ENCODE measurements at regions of chr10 and their contacts with region 1.

Region 1: DNA sequence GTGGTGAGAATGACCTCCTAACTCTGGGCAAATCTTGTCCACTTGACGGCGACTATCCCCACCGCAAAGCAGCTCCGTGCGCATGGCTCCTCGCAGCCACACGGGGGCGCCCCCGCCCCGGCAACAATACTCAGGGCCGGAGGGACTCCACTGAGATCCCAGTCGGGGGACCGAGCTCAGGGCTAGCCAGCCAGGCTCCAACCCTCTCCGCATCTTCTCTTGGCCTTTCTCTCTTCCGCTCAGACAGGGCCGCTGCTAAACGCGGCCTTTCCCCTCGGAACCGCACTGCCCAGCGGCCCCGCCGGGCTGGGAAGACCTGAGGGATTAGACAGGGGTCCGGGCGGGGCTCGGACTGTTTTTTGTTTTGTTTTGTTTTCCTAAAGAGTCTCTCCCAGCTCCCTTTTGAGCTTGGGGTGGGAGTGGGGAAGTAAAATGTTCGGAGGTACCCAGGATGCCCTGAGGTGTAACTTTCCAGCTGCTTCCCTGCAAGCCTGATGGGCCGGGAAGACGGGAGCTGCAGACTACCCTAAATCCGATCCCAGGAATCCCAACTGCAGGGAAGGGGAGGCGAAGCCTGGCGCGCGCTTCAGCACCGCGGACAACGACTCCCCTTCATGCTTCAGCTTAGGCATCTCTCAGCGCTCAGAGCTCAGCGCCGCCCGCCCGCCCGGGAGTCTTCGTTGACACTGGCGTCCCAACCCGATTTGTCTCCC is 2.7 kb downstream of the KCNIP2 start:
- DNase-seq: peak; percentile 89
- CTCF ChIP-seq: peak; percentile 97

Region 2: GRCh38 chr10:101782811-101783735 is 57.8 kb before region 1 on chr10 and contains the start of gene NPM3:
- CTCF ChIA-PET with region 1: interaction called, 22 read pairs
- POLR2A ChIA-PET with region 1: no interaction called
- DNase-seq: peak; percentile 91
- CTCF ChIP-seq: no peak

Region 3: DNA sequence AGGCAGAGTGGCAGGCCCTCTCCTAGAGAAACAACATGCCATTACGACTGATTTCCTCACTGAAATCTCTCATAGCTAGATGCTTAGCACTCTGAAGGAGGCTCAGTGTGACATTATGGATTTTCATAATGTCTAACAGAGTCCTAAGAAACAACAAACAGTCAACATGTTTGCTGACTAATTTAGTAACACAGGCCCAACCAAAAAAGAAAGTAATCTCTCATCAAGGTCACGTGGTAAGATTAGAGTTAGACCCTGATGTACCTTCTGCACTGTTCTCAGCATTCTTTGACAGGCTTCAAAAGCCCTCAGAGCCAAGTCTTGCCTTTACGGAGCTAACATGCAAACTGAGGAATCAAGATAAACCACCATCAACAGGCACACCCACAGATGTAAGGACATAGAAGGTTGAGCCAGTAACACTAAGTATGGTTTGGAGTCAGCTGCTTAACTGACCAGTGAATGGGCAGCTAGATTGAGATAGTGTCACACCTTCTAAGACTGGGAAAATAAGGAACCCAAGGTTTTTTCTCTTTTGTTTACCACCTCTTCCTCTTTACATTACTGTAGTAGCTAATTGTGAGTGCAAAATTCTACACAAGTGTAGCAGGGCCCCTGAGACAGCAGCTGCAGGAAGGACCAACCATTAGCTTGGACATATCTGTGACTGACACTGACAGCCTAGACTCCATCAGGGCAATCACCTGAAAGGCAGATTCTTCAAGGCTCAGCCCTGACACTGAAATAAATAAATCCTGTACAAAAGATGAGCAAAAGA is 18.0 kb after region 1 on chr10:
- CTCF ChIA-PET with region 1: interaction called, 198 read pairs
- POLR2A ChIA-PET with region 1: no interaction called
- DNase-seq: peak; percentile 60
- CTCF ChIP-seq: no peak

Region 4: GRCh38 chr10:101889256-101890210 is 48.6 kb after region 1 on chr10:
- CTCF ChIA-PET with region 1: interaction called, 122 read pairs
- POLR2A ChIA-PET with region 1: interaction called, 4 read pairs
- DNase-seq: peak; percentile 72
- CTCF ChIP-seq: peak; percentile 82

Region 5: DNA sequence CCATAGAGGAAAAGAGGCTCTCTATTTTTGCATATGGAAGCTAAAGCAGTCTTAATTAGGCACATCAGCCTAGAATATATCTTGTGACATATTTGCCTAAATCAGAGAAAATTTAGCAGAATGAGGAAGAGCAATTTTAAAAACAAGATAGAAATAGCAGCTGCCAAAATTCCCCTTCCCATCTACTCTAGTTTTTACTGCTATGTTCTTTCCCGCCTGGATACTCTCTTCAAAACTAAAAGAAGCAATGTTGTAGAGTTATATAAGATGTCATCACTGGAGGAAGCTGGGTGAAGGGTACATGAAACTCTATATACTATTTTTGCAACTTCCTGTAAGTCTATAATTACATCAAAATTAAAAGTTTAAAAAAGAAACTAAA is 128.0 kb after region 1 on chr10:
- CTCF ChIA-PET with region 1: interaction called, 17 read pairs
- POLR2A ChIA-PET with region 1: no interaction called
- DNase-seq: no peak
- CTCF ChIP-seq: no peak

Region 6: DNA sequence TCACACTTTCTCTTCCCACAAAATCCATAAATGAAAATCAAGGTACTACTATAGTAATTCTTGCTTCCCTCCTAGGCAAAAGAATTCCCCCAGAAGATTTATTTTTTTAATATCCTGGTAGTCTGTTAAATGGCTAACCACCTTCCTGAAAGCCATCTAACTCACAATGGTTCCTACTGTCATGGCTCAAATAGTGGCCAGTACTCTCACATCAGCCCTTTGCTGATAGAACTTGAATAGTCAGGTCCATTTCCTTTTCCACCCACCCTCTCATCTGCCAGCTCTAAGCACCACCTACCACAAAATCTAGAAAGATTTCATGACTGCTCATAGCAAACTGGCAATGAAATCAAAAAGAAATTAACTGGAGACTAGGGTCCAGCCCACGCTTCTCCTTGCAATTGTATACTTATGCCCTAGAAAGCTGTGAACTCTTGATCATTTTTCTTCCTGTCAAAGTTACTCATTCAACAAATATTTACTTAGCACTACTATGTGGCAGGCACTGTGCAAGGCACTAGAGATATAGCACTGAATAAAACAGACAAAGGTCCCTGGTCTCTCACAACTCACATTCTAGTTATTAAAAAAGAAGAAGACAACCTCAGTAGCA is 154.7 kb after region 1 on chr10:
- CTCF ChIA-PET with region 1: interaction called, 10 read pairs
- POLR2A ChIA-PET with region 1: no interaction called
- DNase-seq: no peak
- CTCF ChIP-seq: no peak

Region 7: DNA sequence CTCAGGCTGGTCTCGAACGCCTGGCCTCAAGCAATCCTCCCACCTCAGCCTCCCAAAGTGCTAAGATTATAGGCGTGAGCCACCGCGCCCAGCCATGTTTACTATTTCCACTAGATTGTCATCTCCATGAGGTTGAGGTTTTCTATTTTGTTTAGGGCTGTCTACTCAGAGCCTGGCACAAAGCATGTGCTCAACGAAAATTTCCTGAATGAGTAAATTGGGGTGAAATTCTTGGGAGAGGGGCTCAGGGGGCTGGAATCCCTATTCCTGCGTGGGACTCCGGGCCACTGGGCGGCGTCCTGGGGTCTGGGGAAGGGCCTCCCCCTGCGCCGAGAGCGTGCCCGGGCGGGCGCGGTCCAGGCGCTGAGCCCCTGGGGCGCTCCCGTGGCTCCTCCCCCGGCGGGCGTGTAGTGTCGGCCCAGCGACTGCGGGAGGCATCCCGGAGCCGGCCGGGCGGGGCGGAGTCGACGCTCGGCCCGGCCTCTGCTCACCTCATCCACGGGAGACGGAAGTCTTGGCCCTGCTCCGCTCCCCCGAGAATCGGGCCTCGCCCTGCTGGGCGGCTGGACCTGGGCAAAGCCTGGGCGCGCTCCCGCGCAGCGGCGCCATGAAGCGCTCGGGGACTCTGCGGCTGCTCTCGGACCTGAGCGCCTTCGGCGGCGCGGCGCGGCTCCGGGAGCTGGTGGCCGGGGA is 224.1 kb after region 1 on chr10 and contains the start of gene HPS6:
- CTCF ChIA-PET with region 1: interaction called, 484 read pairs
- POLR2A ChIA-PET with region 1: interaction called, 3 read pairs
- DNase-seq: peak; percentile 98
- CTCF ChIP-seq: peak; percentile 9

Region 8: GRCh38 chr10:102159051-102159597 is 318.2 kb after region 1 on chr10:
- CTCF ChIA-PET with region 1: no interaction called
- POLR2A ChIA-PET with region 1: no interaction called
- DNase-seq: no peak
- CTCF ChIP-seq: no peak

Measured in GM10248 (cell line).